Natural killer cell (primary cell): ENCODE measurements at regions of chr7 and their contacts with region 1.

Region 1: GRCh38 chr7:142711746-142712619 is 37.3 kb upstream of the PRSS1 start:
- DNase-seq: peak; percentile 33 to 66
- ATAC-seq: peak; percentile 79 to 88 (median 80)
- H3K4me3 ChIP-seq: peak overlapping the region; percentile 22
- H3K4me3 Mint-ChIP-seq: peak overlapping the region; percentile 91
- H3K27ac ChIP-seq: peak overlapping the region; percentile 76
- H3K27ac Mint-ChIP-seq: peak overlapping the region; percentile 91 to 92
- H3K4me1 ChIP-seq: peaks cover 50% of the 10 kb centered on the region
- H3K4me1 Mint-ChIP-seq: peaks cover 73 to 87% of the 10 kb centered on the region in 2 donors
- H3K27me3 ChIP-seq: no peaks in the 10 kb centered on the region
- H3K27me3 Mint-ChIP-seq: no peaks in the 10 kb centered on the region
- CTCF ChIP-seq: peak; percentile 73

Region 2: GRCh38 chr7:142669074-142669654 is 42.8 kb before region 1 on chr7:
- intact Hi-C with region 1: loop called (anchors 5 kb)
- DNase-seq: peak in 1 of 2 donors; percentile 58
- ATAC-seq: peak in 2 of 3 donors; percentile 71 to 72
- H3K4me3 ChIP-seq: no peak overlapping the region
- H3K4me3 Mint-ChIP-seq: no peak overlapping the region
- H3K27ac ChIP-seq: no peak overlapping the region
- H3K27ac Mint-ChIP-seq: peak overlapping the region; percentile 12 to 57
- H3K4me1 ChIP-seq: peaks cover 9% of the 10 kb centered on the region
- H3K4me1 Mint-ChIP-seq: peaks cover 22 to 27% of the 10 kb centered on the region in 2 donors
- H3K27me3 ChIP-seq: no peaks in the 10 kb centered on the region
- H3K27me3 Mint-ChIP-seq: no peaks in the 10 kb centered on the region
- CTCF ChIP-seq: peak; percentile 77

Region 3: DNA sequence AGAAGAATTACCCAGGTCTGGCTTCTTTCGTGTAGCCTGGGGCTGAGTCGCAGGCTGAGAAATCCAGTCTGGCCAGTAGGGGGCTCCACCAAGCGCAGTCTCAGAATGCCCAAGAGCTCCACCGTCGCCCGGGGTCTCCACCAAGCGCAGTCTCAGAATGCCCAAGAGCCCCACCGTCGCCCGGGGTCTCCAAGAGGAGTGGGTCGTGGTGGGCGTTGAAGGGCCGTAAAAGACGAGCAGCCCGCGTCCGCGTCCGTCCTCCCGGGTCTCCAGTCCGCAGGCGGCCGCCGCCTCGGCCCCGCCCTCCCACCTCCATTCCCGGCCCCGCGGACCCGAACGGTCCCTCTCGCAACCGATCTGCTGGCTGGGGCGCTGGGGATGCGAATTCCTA is 668.3 kb after region 1 on chr7:
- intact Hi-C with region 1: loop called (anchors 5 kb)
- DNase-seq: peak; percentile 84 to 93
- ATAC-seq: peak; percentile 37 to 72 (median 52)
- H3K4me3 ChIP-seq: peak overlapping the region; percentile 86
- H3K4me3 Mint-ChIP-seq: peak overlapping the region; percentile 92
- H3K27ac ChIP-seq: peak overlapping the region; percentile 95
- H3K27ac Mint-ChIP-seq: peak overlapping the region; percentile 94 to 98
- H3K4me1 ChIP-seq: peaks cover 87% of the 10 kb centered on the region
- H3K4me1 Mint-ChIP-seq: peaks cover 45 to 56% of the 10 kb centered on the region in 2 donors
- H3K27me3 ChIP-seq: no peaks in the 10 kb centered on the region
- H3K27me3 Mint-ChIP-seq: no peaks in the 10 kb centered on the region
- CTCF ChIP-seq: peak; percentile 89